Dorsolateral prefrontal cortex (tissue), 120 donors: ENCODE measurements at regions of chr12 and their contacts with region 1.

Region 1: GRCh38 chr12:76621582-76622024 is 62.0 kb upstream of the OSBPL8 start:
- DNase-seq: peak in 9 of 10 donors; percentile 31 to 84 (median 61)
- H3K4me3 ChIP-seq: no peak overlapping the region
- H3K27ac ChIP-seq: no peak overlapping the region
- H3K27me3 ChIP-seq: no peaks in the 10 kb centered on the region
- CTCF ChIP-seq: peak; percentile 86 to 100 (median 98)

Region 2: DNA sequence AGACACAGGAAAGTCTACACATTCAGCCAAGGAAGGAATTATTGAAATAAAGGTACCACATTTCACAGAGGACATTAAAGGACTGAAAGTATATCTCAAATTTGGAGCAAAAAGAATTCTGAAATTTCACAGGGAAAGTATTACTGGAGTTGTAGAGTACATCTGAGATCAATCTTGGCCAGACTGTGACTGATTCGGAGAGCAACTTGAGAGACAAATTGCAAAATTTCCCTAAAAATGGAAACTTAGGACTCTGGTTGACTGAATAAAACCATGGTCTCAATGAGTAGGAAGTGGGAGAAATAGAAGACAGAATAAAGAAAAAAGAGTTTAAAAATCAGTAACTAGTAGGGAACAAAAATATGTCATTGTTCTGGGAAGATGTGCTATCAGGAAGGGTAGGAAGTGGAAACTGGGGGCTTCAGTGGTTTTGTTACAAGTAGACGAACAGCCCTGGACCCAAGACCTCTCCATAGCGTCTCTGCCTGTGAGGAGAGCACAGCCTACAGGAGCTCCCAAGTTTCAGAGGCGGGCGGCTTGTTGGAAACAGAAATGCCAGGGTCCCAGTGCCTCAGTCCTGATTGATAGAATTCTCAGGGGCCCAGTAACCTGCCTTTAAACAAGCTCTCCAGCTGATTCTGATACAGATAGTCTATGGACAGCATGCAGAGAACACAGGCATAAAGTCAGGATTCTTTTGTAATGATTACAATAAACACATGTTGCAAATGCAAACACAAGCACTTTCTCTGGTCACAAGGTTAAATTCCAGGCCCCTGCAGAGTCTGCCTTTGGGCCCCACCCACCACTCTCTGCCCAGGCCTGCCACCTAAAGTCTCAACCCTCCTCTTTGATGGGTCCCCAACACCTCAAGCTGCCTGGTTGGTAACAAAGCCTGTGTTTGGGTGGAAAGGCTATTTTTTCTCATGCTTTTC is 336.5 kb before region 1 on chr12:
- intact Hi-C with region 1: no loop called
- DNase-seq: no peak
- H3K4me3 ChIP-seq: no peak overlapping the region
- H3K27ac ChIP-seq: no peak overlapping the region
- H3K27me3 ChIP-seq: no peaks in the 10 kb centered on the region
- CTCF ChIP-seq: no peak

Region 3: DNA sequence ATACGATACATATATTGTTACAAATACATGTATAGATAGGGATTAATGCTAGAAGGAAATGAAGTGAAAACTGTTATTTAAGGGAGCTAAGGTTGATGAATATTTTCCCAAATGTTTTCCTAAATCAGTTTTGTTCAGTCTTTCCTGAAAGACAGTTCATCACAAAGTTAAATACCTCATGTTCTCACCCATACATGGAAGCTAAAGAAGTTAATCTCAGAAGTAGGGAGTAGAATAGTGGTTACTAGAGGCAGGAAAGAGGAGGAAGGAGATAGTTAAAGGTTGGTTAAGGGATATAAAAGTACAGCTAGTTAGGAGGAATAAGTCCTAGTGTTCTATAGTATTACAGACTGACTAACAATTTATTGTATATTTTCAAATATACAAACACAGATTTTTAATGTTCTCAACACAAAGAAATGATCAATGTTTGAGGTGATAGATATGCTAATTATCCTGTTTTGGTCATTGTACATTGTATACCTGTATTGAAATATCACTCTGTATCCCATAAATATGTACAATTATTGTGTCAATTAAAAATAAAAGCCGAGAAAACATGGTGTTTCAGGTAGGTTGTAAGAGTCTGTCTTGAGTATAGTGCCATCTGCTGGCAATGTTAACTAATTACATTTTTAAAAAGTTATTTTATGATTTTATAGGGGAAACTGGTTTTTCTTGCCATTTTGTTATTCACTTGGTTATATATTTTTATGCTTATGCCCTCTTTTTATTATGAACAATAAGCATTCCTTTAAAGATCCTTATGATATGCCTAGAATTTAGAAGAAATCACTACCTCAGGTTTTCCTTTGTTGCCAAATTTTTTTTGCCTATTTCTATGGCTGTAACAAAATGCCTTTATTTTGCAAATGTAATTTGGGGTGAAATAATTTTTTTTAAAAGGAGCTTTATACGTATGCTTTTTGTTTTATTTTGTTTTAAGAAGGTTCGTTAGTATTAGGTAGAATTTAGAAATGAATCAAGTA is 169.3 kb after region 1 on chr12:
- intact Hi-C with region 1: loop called (anchors 2 to 5 kb)
- DNase-seq: no peak
- H3K4me3 ChIP-seq: no peak overlapping the region
- H3K27ac ChIP-seq: peak overlapping the region in 2 of 59 donors; percentile 8 to 30
- H3K27me3 ChIP-seq: no peaks in the 10 kb centered on the region
- CTCF ChIP-seq: peak; percentile 56 to 94 (median 79)

Region 4: GRCh38 chr12:77010691-77011548 is 389.3 kb after region 1 on chr12:
- intact Hi-C with region 1: loop called (anchors 5 to 10 kb)
- DNase-seq: peak; percentile 54 to 86 (median 78)
- H3K4me3 ChIP-seq: peak overlapping the region in 48 of 59 donors; percentile 4 to 58 (median 38)
- H3K27ac ChIP-seq: peak overlapping the region in 14 of 59 donors; percentile 5 to 54 (median 38)
- H3K27me3 ChIP-seq: peaks cover 0 to 3% (median 0%) of the 10 kb centered on the region in 45 donors
- CTCF ChIP-seq: peak; percentile 62 to 97 (median 89)